Heart right ventricle (tissue), 16 donors: ENCODE measurements at regions of chr1 and their contacts with region 1.

Region 1: GRCh38 chr1:41812051-41812450 is 106.7 kb downstream of the HIVEP3 start:
- DNase-seq: peak in 1 of 2 donors; percentile 44
- ATAC-seq: peak in 2 of 8 donors; percentile 5 to 25
- H3K4me3 ChIP-seq: peak overlapping the region in 1 of 10 donors; percentile 1
- H3K27ac ChIP-seq: peak overlapping the region in 8 of 10 donors; percentile 28 to 86 (median 70)
- H3K4me1 ChIP-seq: peaks cover 0 to 54% (median 36%) of the 10 kb centered on the region in 9 donors
- H3K27me3 ChIP-seq: no peaks in the 10 kb centered on the region
- CTCF ChIP-seq: peak; percentile 30 to 75 (median 65)

Region 2: GRCh38 chr1:41560496-41560895 is 251.6 kb before region 1 on chr1:
- intact Hi-C with region 1: no loop called
- DNase-seq: no peak
- ATAC-seq: no peak
- H3K4me3 ChIP-seq: no peak overlapping the region
- H3K27ac ChIP-seq: no peak overlapping the region
- H3K4me1 ChIP-seq: peaks cover 0 to 19% (median 7%) of the 10 kb centered on the region in 9 donors
- H3K27me3 ChIP-seq: no peaks in the 10 kb centered on the region
- CTCF ChIP-seq: no peak

Region 3: GRCh38 chr1:41876576-41877445 is 64.8 kb after region 1 on chr1:
- intact Hi-C with region 1: loop called in 1 of 10 experiments (anchors 5 kb)
- DNase-seq: no peak
- ATAC-seq: no peak
- H3K4me3 ChIP-seq: no peak overlapping the region
- H3K27ac ChIP-seq: peak overlapping the region in 9 of 10 donors; percentile 14 to 72 (median 61)
- H3K4me1 ChIP-seq: peaks cover 10 to 55% (median 32%) of the 10 kb centered on the region in 9 donors
- H3K27me3 ChIP-seq: no peaks in the 10 kb centered on the region
- CTCF ChIP-seq: no peak

Region 4: GRCh38 chr1:41891199-41891896 is 79.3 kb after region 1 on chr1:
- intact Hi-C with region 1: loop called in 2 of 10 experiments (anchors 5 to 10 kb)
- DNase-seq: no peak
- ATAC-seq: peak; percentile 53 to 77 (median 64)
- H3K4me3 ChIP-seq: peak overlapping the region; percentile 12 to 50 (median 40)
- H3K27ac ChIP-seq: peak overlapping the region; percentile 56 to 88 (median 78)
- H3K4me1 ChIP-seq: peaks cover 2 to 45% (median 32%) of the 10 kb centered on the region in 9 donors
- H3K27me3 ChIP-seq: no peaks in the 10 kb centered on the region
- CTCF ChIP-seq: peak in 1 of 9 donors; percentile 26

Region 5: GRCh38 chr1:42035830-42036604 is 224.0 kb after region 1 on chr1:
- intact Hi-C with region 1: loop called in 6 of 10 experiments (anchors 5 to 10 kb)
- DNase-seq: peak; percentile 96 to 98
- ATAC-seq: peak; percentile 97 to 99 (median 98)
- H3K4me3 ChIP-seq: peak overlapping the region in 9 of 10 donors; percentile 81 to 99 (median 95)
- H3K27ac ChIP-seq: peak overlapping the region; percentile 29 to 91 (median 81)
- H3K4me1 ChIP-seq: peaks cover 0 to 18% (median 12%) of the 10 kb centered on the region in 9 donors
- H3K27me3 ChIP-seq: no peaks in the 10 kb centered on the region
- CTCF ChIP-seq: no peak